Endothelial cell of umbilical vein (primary cell): ENCODE measurements at regions of chr20 and their contacts with region 1.

Region 1: DNA sequence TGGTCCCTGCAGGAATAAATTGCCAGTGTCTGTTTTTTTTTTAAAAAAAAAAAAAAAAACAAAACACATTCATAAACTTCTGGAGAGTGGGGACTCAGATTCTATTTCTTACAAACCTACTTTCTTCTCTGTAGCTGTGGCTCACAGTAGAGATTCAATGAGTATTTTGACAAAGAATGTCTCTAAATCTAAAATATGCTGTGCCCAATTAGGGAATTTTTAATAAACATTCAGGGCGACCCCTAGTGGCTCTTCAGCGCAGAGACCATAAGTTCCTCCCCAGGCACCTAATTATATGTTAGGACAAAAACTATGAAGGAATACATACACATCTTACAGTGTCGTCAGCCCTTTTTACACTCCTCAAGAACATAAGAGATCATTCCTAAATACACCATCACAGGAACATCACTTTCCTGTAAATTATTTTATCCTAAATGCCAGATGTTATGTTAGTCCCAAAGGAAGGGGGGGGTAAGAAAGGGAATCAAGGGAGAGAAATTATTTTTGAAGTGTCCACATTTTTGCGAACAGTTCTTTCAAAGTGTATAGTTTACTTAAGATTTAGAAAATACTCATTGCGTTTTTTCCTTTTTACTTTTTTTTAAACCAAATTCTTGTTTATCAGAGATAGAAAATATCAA is 21.8 kb upstream of the NAA20 start:
- DNase-seq: peak; percentile 65
- H3K4me3 ChIP-seq: no peak overlapping the region
- H3K27ac ChIP-seq: no peak overlapping the region
- H3K4me1 ChIP-seq: peaks cover 48% of the 10 kb centered on the region
- H3K27me3 ChIP-seq: no peaks in the 10 kb centered on the region
- CTCF ChIP-seq: peak; percentile 66 to 74
- POLR2A ChIP-seq: no peak

Region 2: GRCh38 chr20:18793625-18794427 is 1201.5 kb before region 1 on chr20:
- CTCF ChIA-PET with region 1: no interaction called
- POLR2A ChIA-PET with region 1: no interaction called
- dilution Hi-C with region 1: no loop called
- intact Hi-C with region 1: no loop called
- DNase-seq: peak; percentile 90
- H3K4me3 ChIP-seq: peak overlapping the region; percentile 71 to 97 (median 80)
- H3K27ac ChIP-seq: peak overlapping the region; percentile 52
- H3K4me1 ChIP-seq: peaks cover 5% of the 10 kb centered on the region
- H3K27me3 ChIP-seq: peaks cover 0 to 2% of the 10 kb centered on the region in 2 experiments
- CTCF ChIP-seq: no peak
- POLR2A ChIP-seq: peak; percentile 80

Region 3: DNA sequence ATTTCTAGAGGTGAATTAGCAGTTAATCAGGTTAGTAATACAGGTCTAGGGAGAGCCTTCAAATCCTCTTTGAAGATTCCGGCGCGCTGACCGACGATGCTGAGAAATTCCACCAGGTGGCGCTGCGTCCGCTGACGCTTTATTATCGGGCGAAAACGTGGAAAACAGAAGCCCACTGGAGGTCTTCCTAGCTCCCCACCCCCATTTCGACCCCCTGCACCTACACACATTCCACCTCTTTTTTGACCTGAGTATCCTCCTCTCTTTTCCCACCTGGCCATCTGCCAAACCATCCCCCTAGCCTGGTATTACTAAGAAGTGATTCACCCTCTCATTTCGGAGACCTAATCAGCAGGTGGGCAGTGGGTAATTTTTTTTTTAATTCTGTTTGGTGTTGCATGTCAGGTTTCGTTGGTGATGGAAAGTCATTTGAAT is 302.6 kb before region 1 on chr20:
- CTCF ChIA-PET with region 1: interaction called, 30 read pairs
- POLR2A ChIA-PET with region 1: no interaction called
- dilution Hi-C with region 1: no loop called
- intact Hi-C with region 1: loop called (anchors 1 kb)
- DNase-seq: peak; percentile 68
- H3K4me3 ChIP-seq: no peak overlapping the region
- H3K27ac ChIP-seq: no peak overlapping the region
- H3K4me1 ChIP-seq: peaks cover 5% of the 10 kb centered on the region
- H3K27me3 ChIP-seq: no peaks in the 10 kb centered on the region
- CTCF ChIP-seq: peak; percentile 84 to 87
- POLR2A ChIP-seq: no peak

Region 4: DNA sequence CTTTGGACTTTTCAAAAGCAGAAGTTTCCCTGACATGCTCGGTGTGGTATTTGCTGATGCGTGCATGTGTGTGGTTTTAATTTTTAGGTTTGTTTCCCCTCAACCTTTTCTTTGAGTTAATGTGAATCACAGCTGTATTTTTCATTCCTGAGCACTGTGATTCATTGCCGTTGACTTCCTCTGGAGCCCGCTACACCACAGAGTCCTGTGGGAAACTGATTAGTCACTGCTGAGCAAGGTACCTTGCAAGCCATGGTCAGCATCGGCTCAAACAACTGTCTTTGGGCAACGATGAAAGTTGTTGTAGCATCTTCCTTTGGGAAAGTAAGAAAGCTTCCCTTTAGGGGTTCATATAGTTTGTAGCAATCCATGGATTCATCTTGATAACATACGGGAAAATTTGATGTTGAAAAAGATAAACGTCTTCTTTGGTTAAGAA is 179.8 kb before region 1 on chr20:
- CTCF ChIA-PET with region 1: interaction called, 23 read pairs
- POLR2A ChIA-PET with region 1: interaction called, 5 read pairs
- dilution Hi-C with region 1: loop called (anchors 25 kb)
- intact Hi-C with region 1: loop called (anchors 1 kb)
- DNase-seq: peak; percentile 98
- H3K4me3 ChIP-seq: no peak overlapping the region
- H3K27ac ChIP-seq: peak overlapping the region; percentile 96
- H3K4me1 ChIP-seq: peaks cover 59% of the 10 kb centered on the region
- H3K27me3 ChIP-seq: no peaks in the 10 kb centered on the region
- CTCF ChIP-seq: no peak
- POLR2A ChIP-seq: peak; percentile 20

Region 5: GRCh38 chr20:19903168-19903811 is 92.1 kb before region 1 on chr20:
- CTCF ChIA-PET with region 1: interaction called, 15 read pairs
- POLR2A ChIA-PET with region 1: no interaction called
- dilution Hi-C with region 1: no loop called
- intact Hi-C with region 1: loop called (anchors 1 kb)
- DNase-seq: peak; percentile 51
- H3K4me3 ChIP-seq: no peak overlapping the region
- H3K27ac ChIP-seq: peak overlapping the region; percentile 3
- H3K4me1 ChIP-seq: peaks cover 18% of the 10 kb centered on the region
- H3K27me3 ChIP-seq: no peaks in the 10 kb centered on the region
- CTCF ChIP-seq: peak; percentile 14 to 23
- POLR2A ChIP-seq: no peak

Region 6: GRCh38 chr20:19974626-19975435 is 20.5 kb before region 1 on chr20:
- CTCF ChIA-PET with region 1: interaction called, 45 read pairs
- POLR2A ChIA-PET with region 1: interaction called, 3 read pairs
- dilution Hi-C with region 1: no loop called
- intact Hi-C with region 1: loop called (anchors 1 kb)
- DNase-seq: peak; percentile 85
- H3K4me3 ChIP-seq: peak overlapping the region in 1 of 3 experiments; percentile 2
- H3K27ac ChIP-seq: peak overlapping the region; percentile 72
- H3K4me1 ChIP-seq: peaks cover 46% of the 10 kb centered on the region
- H3K27me3 ChIP-seq: no peaks in the 10 kb centered on the region
- CTCF ChIP-seq: no peak
- POLR2A ChIP-seq: no peak

Region 7: GRCh38 chr20:20174089-20174836 is 178.9 kb after region 1 on chr20:
- CTCF ChIA-PET with region 1: no interaction called
- POLR2A ChIA-PET with region 1: no interaction called
- dilution Hi-C with region 1: no loop called
- intact Hi-C with region 1: no loop called
- DNase-seq: no peak
- H3K4me3 ChIP-seq: no peak overlapping the region
- H3K27ac ChIP-seq: no peak overlapping the region
- H3K4me1 ChIP-seq: no peaks in the 10 kb centered on the region
- H3K27me3 ChIP-seq: no peaks in the 10 kb centered on the region
- CTCF ChIP-seq: no peak
- POLR2A ChIP-seq: no peak

Region 8: GRCh38 chr20:20261159-20261558 is 265.8 kb after region 1 on chr20:
- CTCF ChIA-PET with region 1: no interaction called
- POLR2A ChIA-PET with region 1: no interaction called
- dilution Hi-C with region 1: no loop called
- intact Hi-C with region 1: no loop called
- DNase-seq: no peak
- H3K4me3 ChIP-seq: no peak overlapping the region
- H3K27ac ChIP-seq: no peak overlapping the region
- H3K4me1 ChIP-seq: no peaks in the 10 kb centered on the region
- H3K27me3 ChIP-seq: no peaks in the 10 kb centered on the region
- CTCF ChIP-seq: no peak
- POLR2A ChIP-seq: no peak